GM13977 (cell line): ENCODE measurements at regions of chr11 and their contacts with region 1.

Region 1: DNA sequence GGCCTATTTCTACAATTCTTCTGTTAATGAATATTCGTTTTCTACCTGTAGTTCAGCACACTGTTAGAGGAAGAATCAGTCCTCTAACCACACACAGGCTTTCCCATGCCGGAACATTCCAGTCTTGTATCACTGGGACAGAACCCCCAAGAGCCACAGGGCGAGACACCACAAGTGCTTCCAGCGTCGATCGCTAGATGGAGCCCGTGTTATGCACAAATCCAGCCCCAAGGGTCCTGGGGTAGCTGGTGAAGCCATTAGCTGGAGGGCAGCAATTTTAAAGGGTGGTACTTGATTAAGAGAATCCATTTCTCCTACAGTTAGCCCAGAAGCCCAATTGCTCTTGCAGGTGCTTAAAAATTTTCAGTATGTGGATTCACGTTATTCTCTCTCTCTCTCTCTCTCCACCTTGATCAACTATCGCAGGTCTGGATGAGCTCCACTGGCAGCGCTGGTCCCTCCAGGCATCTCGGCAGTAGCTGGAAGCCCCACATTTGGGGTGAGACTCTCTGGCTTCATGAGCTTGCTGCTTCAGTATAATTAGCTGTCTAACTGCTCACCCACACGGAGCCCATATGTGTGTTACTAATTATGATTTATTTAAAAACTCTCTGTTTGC is 148.2 kb upstream of the SNX19 start:
- DNase-seq: peak; percentile 71
- CTCF ChIP-seq: peak; percentile 91

Region 2: GRCh38 chr11:130671801-130672700 is 392.4 kb before region 1 on chr11:
- in situ Hi-C with region 1: no loop called
- DNase-seq: no peak
- CTCF ChIP-seq: no peak

Region 3: GRCh38 chr11:130882138-130882551 is 182.3 kb before region 1 on chr11:
- in situ Hi-C with region 1: no loop called
- DNase-seq: no peak
- CTCF ChIP-seq: no peak

Region 4: DNA sequence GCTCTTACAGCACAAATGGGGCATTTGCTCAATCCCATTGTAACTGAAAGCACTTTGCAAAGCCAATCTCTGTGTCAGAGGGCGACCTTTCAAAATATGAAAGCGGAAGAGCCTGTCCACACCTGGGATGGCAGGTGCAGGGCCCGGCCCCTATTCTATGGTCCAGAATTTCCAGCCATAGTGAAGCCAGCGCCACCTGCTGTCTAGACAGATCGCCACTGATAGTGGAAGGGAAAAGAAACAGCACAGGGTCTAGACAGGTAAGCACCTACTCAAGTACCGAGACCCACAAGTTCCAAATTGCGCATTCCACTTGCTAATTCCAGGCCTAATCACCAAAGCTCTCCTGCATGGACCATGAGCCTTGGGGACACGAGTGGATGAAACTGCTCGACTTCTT is 447.3 kb after region 1 on chr11:
- in situ Hi-C with region 1: loop called (anchors 25 kb)
- DNase-seq: peak; percentile 46
- CTCF ChIP-seq: peak; percentile 70

Region 5: DNA sequence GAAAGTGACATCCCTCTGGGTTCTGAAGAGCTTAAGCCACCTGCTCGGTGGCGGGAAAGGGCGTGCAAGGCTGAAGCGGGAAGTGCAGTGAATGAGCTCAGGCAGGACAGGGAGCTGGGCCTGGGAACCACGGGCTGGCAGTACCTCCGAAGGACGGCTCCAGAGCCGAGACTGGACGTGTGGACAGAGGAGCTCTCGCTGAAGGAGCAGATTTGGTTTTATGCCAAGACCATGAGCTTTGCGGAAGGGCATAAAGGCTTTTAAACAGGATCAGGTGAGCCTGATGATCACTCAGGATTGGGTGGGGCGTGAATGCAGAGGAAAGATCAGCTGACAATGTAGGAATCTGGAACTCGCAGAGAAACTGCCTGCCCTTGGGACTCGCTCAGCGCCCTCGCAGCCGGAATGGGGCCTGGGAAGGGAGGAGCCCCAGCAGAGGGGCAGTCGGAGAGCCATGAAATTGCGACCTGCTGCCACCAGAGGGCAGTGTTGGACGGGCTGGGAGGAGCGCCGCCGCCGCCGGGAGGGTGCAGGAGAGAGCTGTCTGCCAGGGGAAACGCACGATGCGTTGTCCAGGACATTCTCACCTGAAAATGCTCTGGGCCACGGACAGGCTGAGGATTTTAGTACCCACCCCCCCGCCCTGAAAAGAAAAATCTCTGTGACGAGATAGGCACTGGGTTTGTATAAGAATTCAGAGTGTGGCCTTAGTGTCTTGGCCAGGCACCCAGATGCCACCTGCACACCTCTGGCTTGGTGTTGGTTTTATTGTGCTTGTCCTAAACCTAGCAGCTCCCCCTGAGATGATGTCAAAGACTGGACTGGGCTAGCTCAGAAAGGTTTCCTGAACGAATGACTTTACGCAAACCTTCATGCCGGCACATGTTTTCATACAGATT is 630.3 kb after region 1 on chr11:
- in situ Hi-C with region 1: loop called (anchors 25 kb)
- DNase-seq: peak; percentile 81
- CTCF ChIP-seq: peak; percentile 93